Tibial artery (tissue), 4 donors: ENCODE measurements at regions of chr3 and their contacts with region 1.

Region 1: GRCh38 chr3:53195602-53196574 is 34.9 kb downstream of the PRKCD start:
- DNase-seq: peak in 1 of 2 donors; percentile 41
- H3K4me3 ChIP-seq: no peak overlapping the region
- H3K27ac ChIP-seq: no peak overlapping the region
- H3K4me1 ChIP-seq: peaks cover 0 to 36% (median 31%) of the 10 kb centered on the region in 4 donors
- H3K27me3 ChIP-seq: no peaks in the 10 kb centered on the region
- CTCF ChIP-seq: peak; percentile 98 to 99

Region 2: DNA sequence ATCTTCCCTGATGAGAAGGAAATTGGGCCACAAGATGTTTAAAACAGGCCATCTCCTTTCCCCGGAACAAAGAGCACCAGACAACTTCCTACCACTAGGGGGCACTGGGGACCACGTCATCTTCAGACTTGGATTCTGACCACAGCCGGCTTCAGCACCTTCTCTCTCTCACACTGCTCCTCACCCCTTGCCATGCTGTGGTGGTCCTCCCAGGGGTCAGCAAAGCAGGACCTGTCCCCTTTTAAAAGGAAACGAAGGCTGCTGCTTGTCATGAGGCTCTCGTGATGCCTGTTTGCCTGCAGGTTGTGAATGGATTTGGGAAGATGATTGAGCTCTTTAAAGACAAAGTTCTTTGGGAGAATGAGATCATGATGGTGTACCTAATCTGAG is 81.9 kb before region 1 on chr3:
- intact Hi-C with region 1: loop called (anchors 2 kb)
- DNase-seq: peak; percentile 83
- H3K4me3 ChIP-seq: no peak overlapping the region
- H3K27ac ChIP-seq: no peak overlapping the region
- H3K4me1 ChIP-seq: no peaks in the 10 kb centered on the region
- H3K27me3 ChIP-seq: no peaks in the 10 kb centered on the region
- CTCF ChIP-seq: peak; percentile 88 to 94

Region 3: GRCh38 chr3:53134631-53135232 is 61.2 kb before region 1 on chr3:
- intact Hi-C with region 1: loop called (anchors 1 kb)
- DNase-seq: peak; percentile 66 to 85
- H3K4me3 ChIP-seq: no peak overlapping the region
- H3K27ac ChIP-seq: no peak overlapping the region
- H3K4me1 ChIP-seq: peaks cover 0 to 16% (median 6%) of the 10 kb centered on the region in 4 donors
- H3K27me3 ChIP-seq: no peaks in the 10 kb centered on the region
- CTCF ChIP-seq: peak; percentile 75 to 80